Activated CD4-positive, alpha-beta T cell treated with anti-CD3 and anti-CD28 coated beads for 36 hours (primary cell): ENCODE measurements at regions of chr11 and their contacts with region 1.

Region 1: GRCh38 chr11:126480410-126481302 is 125.2 kb downstream of the ST3GAL4 start:
- DNase-seq: peak; percentile 83
- ATAC-seq: peak; percentile 83
- H3K4me3 Mint-ChIP-seq: no peak overlapping the region
- H3K27ac Mint-ChIP-seq: peak overlapping the region; percentile 81
- H3K4me1 Mint-ChIP-seq: peaks cover 12% of the 10 kb centered on the region
- H3K27me3 Mint-ChIP-seq: no peaks in the 10 kb centered on the region

Region 2: DNA sequence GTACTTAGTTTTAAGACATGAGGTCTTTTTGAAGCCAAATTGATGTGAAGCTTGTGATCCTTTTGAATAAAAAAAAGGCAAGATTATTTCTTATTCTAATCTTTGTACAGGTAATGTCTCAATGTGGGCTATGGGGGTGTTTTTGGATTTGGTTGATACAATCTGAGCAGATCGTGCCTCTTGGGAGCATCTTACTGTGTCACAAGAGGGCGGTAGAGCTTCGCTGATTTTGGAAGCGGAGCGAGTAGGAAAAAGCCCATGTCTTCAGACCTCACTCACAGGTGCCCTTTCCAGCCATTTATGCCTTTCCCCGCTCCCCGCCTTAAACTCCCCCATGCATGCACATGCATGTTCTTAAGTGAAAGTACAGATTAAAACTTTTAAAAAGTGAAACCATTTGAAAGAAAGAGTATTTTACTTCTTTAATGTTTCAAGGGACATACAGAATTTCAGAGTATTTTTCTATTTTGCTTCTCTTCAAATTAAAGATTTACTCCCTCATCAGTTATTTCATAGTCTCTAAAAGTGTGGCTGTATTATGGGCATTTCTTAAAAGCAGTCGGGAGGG is 557.6 kb before region 1 on chr11:
- CTCF ChIA-PET with region 1: no interaction called
- POLR2A ChIA-PET with region 1: no interaction called
- intact Hi-C with region 1: loop called (anchors 2 kb)
- DNase-seq: peak; percentile 74
- ATAC-seq: peak; percentile 87
- H3K4me3 Mint-ChIP-seq: no peak overlapping the region
- H3K27ac Mint-ChIP-seq: no peak overlapping the region
- H3K4me1 Mint-ChIP-seq: no peaks in the 10 kb centered on the region
- H3K27me3 Mint-ChIP-seq: peaks cover 14% of the 10 kb centered on the region

Region 3: DNA sequence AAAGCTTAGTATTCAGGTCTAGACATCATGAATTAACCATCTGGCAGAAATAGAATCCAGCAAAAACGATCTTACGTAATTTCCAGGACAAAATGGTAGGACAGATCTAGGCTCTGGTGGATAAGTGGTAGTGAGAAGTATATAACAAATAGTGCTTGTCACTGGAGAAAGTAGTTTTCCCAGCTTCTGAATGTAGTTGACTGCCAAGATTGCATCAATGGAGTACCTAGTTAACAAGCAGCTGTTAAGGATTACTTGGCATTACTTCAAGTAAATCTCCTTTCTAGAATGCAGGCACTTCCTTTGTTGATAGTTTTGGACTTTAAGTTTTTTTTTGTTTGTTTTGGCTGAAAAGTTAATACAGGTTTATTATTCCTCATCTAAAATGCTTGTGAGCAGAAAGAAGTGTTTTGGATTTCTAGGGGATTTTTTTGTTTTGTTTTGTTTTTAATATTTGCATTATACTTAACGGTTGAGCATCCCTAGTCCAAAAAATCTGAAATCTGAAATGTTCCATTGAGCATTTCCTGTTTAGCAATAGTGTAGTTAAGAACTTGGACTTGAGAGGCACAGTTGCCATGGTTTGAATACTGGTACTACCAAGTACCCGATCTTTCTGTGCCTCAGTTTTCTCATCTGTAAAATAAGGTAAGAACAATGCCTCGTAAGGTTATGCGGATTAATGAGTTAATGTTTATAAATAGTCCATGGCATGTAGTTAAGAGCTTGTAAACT is 248.8 kb before region 1 on chr11:
- CTCF ChIA-PET with region 1: no interaction called
- POLR2A ChIA-PET with region 1: no interaction called
- intact Hi-C with region 1: no loop called
- DNase-seq: no peak
- ATAC-seq: no peak
- H3K4me3 Mint-ChIP-seq: no peak overlapping the region
- H3K27ac Mint-ChIP-seq: no peak overlapping the region
- H3K4me1 Mint-ChIP-seq: no peaks in the 10 kb centered on the region
- H3K27me3 Mint-ChIP-seq: no peaks in the 10 kb centered on the region

Region 4: DNA sequence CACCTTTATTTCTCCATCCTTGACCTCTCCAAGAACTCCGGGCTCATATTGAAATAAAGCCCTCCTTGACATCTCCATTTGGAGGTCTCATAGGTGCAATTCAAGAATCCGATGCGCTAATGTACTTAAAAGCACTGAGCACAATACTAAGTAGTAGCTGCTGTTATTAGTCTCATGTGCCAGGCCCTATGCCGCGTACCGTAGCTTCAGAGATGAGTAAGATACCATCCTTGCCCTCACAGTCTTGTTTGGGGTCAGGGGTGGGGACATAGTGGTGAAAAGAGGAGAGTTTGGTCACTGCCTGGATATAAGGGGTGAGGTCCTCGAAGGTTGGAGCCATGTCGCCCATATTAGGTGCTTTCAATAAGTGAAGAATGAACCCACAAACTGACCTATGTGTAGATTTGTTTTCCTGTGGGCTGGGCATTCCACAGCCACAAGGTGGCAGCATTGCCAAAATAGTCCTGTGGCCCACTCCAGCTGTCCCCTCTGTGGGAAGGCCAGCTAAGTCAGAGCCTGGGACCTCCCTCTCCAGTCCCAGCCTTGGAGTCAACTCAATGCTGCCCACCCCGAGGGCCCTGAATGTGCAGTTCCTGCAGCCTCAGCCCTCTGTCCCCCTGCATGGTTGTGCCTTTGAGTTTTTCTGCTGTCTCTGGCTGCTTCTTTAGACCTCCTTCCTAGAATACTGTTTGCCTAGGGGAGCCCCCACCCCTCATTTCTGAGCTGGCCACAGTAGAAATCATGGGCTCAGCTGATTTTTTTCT is 170.2 kb before region 1 on chr11:
- CTCF ChIA-PET with region 1: interaction called, 19 read pairs
- POLR2A ChIA-PET with region 1: no interaction called
- intact Hi-C with region 1: loop called (anchors 1 kb)
- DNase-seq: peak; percentile 74
- ATAC-seq: peak; percentile 60
- H3K4me3 Mint-ChIP-seq: no peak overlapping the region
- H3K27ac Mint-ChIP-seq: no peak overlapping the region
- H3K4me1 Mint-ChIP-seq: peaks cover 17% of the 10 kb centered on the region
- H3K27me3 Mint-ChIP-seq: no peaks in the 10 kb centered on the region

Region 5: GRCh38 chr11:126440792-126441514 is 39.7 kb before region 1 on chr11:
- CTCF ChIA-PET with region 1: interaction called, 49 read pairs
- POLR2A ChIA-PET with region 1: no interaction called
- intact Hi-C with region 1: loop called (anchors 1 kb)
- DNase-seq: peak; percentile 84
- ATAC-seq: peak; percentile 90
- H3K4me3 Mint-ChIP-seq: no peak overlapping the region
- H3K27ac Mint-ChIP-seq: no peak overlapping the region
- H3K4me1 Mint-ChIP-seq: peaks cover 3% of the 10 kb centered on the region
- H3K27me3 Mint-ChIP-seq: peaks cover 7% of the 10 kb centered on the region

Region 6: DNA sequence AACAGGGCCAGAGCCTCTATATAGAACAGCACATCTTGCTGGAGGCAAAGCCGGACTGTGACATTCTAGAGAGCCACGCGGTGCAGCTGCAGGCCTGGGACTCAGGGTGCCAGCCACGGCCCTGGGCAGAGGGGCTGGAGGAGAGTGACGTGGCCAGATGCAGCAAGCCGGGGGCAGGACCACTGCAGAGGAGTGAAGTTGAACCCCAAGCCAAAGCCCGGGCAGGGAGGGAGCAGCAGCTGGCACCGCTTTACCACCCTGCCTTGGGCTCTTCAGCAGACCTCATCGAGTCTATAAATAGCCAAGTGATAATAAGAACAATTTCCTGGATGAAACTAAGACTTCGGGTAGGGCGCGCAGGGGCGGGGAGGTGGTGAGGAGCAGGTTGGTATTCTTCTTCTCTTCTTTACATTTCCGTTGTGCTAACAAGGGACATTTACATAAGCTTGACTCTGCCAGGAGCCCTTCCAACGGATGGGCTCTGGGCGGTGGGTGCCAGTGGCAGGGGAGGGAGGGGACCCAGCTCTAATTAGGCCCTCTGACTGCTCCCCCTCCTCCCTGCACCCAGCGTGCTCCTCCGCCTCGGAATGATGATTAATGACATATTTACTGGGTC is 15.0 kb before region 1 on chr11:
- CTCF ChIA-PET with region 1: interaction called, 15 read pairs
- POLR2A ChIA-PET with region 1: interaction called, 3 read pairs
- intact Hi-C with region 1: no loop called
- DNase-seq: peak; percentile 59
- ATAC-seq: peak; percentile 79
- H3K4me3 Mint-ChIP-seq: no peak overlapping the region
- H3K27ac Mint-ChIP-seq: no peak overlapping the region
- H3K4me1 Mint-ChIP-seq: peaks cover 20% of the 10 kb centered on the region
- H3K27me3 Mint-ChIP-seq: peaks cover 2% of the 10 kb centered on the region

Region 7: GRCh38 chr11:126660761-126661425 is 180.2 kb after region 1 on chr11:
- CTCF ChIA-PET with region 1: no interaction called
- POLR2A ChIA-PET with region 1: no interaction called
- intact Hi-C with region 1: no loop called
- DNase-seq: no peak
- ATAC-seq: no peak
- H3K4me3 Mint-ChIP-seq: no peak overlapping the region
- H3K27ac Mint-ChIP-seq: no peak overlapping the region
- H3K4me1 Mint-ChIP-seq: no peaks in the 10 kb centered on the region
- H3K27me3 Mint-ChIP-seq: peaks cover 3% of the 10 kb centered on the region